ENCODE measurements at regions of chr20 and their contacts with region 1.

Region 1: GRCh38 chr20:25437153-25437581 is 29.7 kb downstream of the GINS1 start:
- DNase-seq: no peak
- ATAC-seq: no peak
- H3K4me3 ChIP-seq: no peak overlapping the region
- H3K27ac ChIP-seq: no peak overlapping the region
- H3K4me1 ChIP-seq: peaks cover 7% of the 10 kb centered on the region
- H3K27me3 ChIP-seq: no peaks in the 10 kb centered on the region
- CTCF ChIP-seq: no peak
- EP300 ChIP-seq: no peak
- POLR2A ChIP-seq: no peak
- RAD21 ChIP-seq: no peak

Region 2: DNA sequence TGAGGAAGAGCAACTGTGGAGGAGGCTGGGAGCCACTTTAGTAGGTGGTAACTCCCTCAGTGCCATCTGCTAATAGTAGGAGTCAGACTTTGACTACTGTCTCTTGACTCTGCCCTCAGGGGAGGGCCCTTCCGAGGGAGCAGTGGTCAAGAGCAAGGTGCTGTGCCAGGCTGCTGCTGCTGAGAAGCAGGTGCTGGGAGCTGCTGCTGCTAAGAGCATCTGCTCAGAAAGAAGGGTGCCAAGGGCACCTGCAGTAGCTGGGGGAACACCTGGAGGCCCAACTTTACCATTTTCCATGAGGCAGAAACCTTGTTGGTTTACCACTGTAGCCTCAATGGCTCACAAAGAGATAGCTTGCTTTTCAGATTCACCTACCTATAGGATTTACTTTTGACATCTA is 1467.1 kb before region 1 on chr20:
- CTCF ChIA-PET with region 1: no interaction called
- POLR2A ChIA-PET with region 1: no interaction called
- RAD21 ChIA-PET with region 1: no interaction called
- SMC1A ChIA-PET with region 1: no interaction called
- in situ Hi-C with region 1: loop called (anchors 25 kb)
- intact Hi-C with region 1: no loop called
- DNase-seq: no peak
- ATAC-seq: no peak
- H3K4me3 ChIP-seq: no peak overlapping the region
- H3K27ac ChIP-seq: no peak overlapping the region
- H3K4me1 ChIP-seq: no peaks in the 10 kb centered on the region
- H3K27me3 ChIP-seq: no peaks in the 10 kb centered on the region
- CTCF ChIP-seq: no peak
- EP300 ChIP-seq: no peak
- POLR2A ChIP-seq: no peak
- RAD21 ChIP-seq: no peak

Region 3: DNA sequence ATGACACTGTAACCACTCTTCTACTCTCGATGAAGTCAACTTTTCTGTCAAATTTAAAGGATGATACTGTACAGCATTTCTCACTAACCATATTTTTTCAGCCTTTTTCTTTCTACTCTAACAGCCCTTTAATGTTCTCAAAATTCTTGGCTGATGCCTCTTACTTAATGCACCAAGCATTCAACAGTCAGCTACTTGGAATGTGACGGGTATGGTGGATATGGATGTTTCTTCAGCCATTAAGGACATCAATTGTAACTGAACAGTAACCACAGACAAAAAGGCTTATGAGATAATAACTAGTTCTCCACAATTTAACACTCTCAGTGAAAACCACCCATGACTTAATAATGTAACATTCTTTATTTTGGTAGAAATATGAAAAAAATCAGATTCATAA is 726.7 kb after region 1 on chr20:
- CTCF ChIA-PET with region 1: no interaction called
- POLR2A ChIA-PET with region 1: no interaction called
- RAD21 ChIA-PET with region 1: no interaction called
- SMC1A ChIA-PET with region 1: no interaction called
- in situ Hi-C with region 1: loop called (anchors 25 kb)
- intact Hi-C with region 1: no loop called
- DNase-seq: no peak
- ATAC-seq: no peak
- H3K4me3 ChIP-seq: no peak overlapping the region
- H3K27ac ChIP-seq: no peak overlapping the region
- H3K4me1 ChIP-seq: no peaks in the 10 kb centered on the region
- H3K27me3 ChIP-seq: no peaks in the 10 kb centered on the region
- CTCF ChIP-seq: no peak
- EP300 ChIP-seq: no peak
- POLR2A ChIP-seq: no peak
- RAD21 ChIP-seq: no peak

Measured in GM12878 (cell line).